Ascending aorta (tissue), 2 donors: ENCODE measurements at regions of chr10 and their contacts with region 1.

Region 1: GRCh38 chr10:118412932-118413331 is 70.8 kb upstream of the FAM204A start:
- DNase-seq: no peak
- H3K4me3 ChIP-seq: no peak overlapping the region
- H3K27ac ChIP-seq: no peak overlapping the region
- H3K4me1 ChIP-seq: no peaks in the 10 kb centered on the region
- H3K27me3 ChIP-seq: no peaks in the 10 kb centered on the region
- CTCF ChIP-seq: no peak

Region 2: DNA sequence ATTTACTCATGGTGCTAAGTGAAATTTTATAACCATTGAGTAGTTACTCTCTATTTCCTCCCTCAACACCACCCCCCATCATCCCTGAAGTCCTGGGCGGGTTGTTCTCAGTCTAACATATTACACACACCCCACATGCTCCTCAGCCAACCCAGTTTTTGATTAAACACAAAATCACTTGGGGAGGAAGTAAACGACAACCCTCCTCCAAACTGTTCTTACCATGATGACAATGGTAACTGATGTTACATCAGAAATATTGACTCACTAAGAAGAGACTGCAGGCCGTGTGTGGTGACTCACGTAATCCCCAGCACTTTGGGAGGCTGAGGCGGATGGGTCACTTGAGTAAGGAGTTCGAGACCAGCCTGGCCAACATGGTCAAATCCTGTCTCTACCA is 410.4 kb before region 1 on chr10:
- intact Hi-C with region 1: no loop called
- DNase-seq: no peak
- H3K4me3 ChIP-seq: no peak overlapping the region
- H3K27ac ChIP-seq: no peak overlapping the region
- H3K4me1 ChIP-seq: no peaks in the 10 kb centered on the region
- H3K27me3 ChIP-seq: no peaks in the 10 kb centered on the region
- CTCF ChIP-seq: no peak

Region 3: DNA sequence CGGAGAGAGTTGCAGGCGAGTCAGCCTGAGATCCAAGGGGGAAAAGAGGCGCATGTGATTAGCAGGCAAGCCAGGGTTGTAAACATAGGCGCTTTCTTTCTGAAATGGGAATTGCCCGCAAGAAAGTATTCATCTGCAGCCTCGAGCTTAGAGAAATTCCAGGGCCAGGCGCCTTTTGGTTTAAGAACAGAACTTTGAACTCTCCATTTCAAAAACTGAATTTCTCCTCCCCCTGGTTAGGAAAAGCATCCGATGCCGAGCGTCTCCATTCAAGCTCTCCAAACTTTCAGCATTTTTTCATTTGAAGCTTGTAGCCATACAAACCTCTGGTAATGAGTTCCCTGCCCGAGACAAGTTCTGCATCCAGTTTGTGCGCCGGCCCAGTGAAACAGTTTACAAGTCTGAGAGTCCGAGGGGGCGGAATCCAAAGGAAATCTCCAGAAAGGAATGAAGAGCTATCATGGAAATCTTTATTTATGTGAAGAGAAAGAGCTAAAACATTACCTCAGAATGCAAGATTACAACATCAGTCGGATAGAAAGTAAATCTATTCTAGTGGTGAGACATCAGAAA is 140.7 kb before region 1 on chr10:
- intact Hi-C with region 1: loop called (anchors 10 kb)
- DNase-seq: no peak
- H3K4me3 ChIP-seq: peak overlapping the region; percentile 33 to 56
- H3K27ac ChIP-seq: no peak overlapping the region
- H3K4me1 ChIP-seq: peaks cover 0 to 9% of the 10 kb centered on the region in 2 donors
- H3K27me3 ChIP-seq: no peaks in the 10 kb centered on the region
- CTCF ChIP-seq: no peak

Region 4: DNA sequence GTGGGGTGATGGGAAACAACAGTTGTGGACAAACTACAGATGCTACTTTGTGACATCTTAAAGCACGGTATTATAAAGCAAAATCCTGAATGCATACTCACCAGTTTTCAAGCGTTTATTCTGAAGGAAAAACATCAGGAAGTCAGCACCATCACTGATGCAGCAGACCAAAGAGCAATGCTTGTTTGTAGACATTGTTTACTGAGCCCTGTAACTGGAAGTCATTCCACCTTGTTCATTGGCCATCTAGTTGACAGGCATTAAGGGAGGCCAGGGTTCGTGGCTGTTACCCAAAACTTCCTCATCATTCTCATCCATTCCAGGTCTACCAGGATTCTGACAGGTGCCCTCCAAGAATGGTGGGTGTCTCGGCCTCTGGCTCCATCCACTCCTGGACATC is 15.5 kb before region 1 on chr10:
- intact Hi-C with region 1: no loop called
- DNase-seq: no peak
- H3K4me3 ChIP-seq: no peak overlapping the region
- H3K27ac ChIP-seq: no peak overlapping the region
- H3K4me1 ChIP-seq: no peaks in the 10 kb centered on the region
- H3K27me3 ChIP-seq: no peaks in the 10 kb centered on the region
- CTCF ChIP-seq: no peak